ENCODE measurements at regions of chr9 and their contacts with region 1.

Region 1: DNA sequence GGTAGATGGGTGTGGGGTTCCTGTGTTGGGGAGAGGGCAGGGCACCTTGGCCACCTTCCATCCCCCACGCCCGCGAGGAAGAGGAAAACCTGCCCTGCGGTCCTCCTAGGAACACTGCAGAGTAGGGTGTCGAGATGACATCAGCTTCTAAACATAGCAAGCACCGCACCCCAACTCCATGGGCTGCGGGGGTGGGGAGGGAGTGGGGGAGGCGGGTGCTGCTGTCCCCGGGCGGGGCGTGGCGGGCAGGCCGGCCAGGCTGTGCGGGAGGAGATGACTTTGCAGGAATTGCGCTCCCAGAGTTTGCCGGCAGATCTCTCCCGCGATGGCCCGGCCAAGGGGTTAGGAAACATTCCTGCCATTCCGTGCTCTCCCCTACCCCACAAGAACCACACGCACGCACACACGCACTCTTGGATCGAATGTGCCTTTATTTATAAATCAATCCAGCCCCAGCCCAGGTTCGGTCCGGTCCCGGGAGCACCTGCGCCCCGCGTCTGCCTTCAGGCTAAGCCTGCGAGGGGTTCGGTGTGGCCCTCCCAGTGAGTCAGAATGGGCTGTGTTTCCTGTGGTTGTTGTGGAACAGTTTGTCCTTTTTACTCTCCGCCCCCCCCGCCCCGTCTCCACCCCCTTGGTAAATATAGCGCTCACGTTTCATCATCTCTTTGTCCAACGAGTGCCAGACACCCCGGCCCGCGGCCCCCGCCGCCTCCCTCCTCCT is 5.2 kb upstream of the KLF9 start:
- DNase-seq: peak; percentile 96 to 98 (median 98)
- ATAC-seq: peak; percentile 77 to 79
- H3K4me3 ChIP-seq: peak overlapping the region; percentile 45
- H3K27ac ChIP-seq: peak overlapping the region; percentile 100
- H3K4me1 ChIP-seq: peaks cover 9% of the 10 kb centered on the region
- H3K27me3 ChIP-seq: no peaks in the 10 kb centered on the region

Region 2: GRCh38 chr9:70466976-70467561 is 47.4 kb after region 1 on chr9:
- intact Hi-C with region 1: loop called in 3 of 4 experiments (anchors 2 to 5 kb)
- DNase-seq: no peak
- ATAC-seq: no peak
- H3K4me3 ChIP-seq: no peak overlapping the region
- H3K27ac ChIP-seq: no peak overlapping the region
- H3K4me1 ChIP-seq: peaks cover 26% of the 10 kb centered on the region
- H3K27me3 ChIP-seq: no peaks in the 10 kb centered on the region

Region 3: GRCh38 chr9:70484210-70485130 is 64.8 kb after region 1 on chr9:
- intact Hi-C with region 1: loop called (anchors 2 to 5 kb)
- DNase-seq: no peak
- ATAC-seq: peak; percentile 59 to 75
- H3K4me3 ChIP-seq: no peak overlapping the region
- H3K27ac ChIP-seq: peak overlapping the region; percentile 74
- H3K4me1 ChIP-seq: peaks cover 35% of the 10 kb centered on the region
- H3K27me3 ChIP-seq: no peaks in the 10 kb centered on the region

Measured in right cardiac atrium (tissue), 5 donors.